Common myeloid progenitor, CD34-positive (primary cell): ENCODE measurements at regions of chr2 and their contacts with region 1.

Region 1: GRCh38 chr2:201220102-201220570 is 37.2 kb downstream of the CASP10 start:
- DNase-seq: peak in 2 of 3 donors; percentile 62 to 74
- H3K4me3 ChIP-seq: peak overlapping the region in 3 of 7 experiments; percentile 5 to 39 (median 35)
- H3K27ac ChIP-seq: peak overlapping the region in 1 of 2 experiments; percentile 56
- H3K4me1 ChIP-seq: peaks cover 13 to 42% (median 36%) of the 10 kb centered on the region in 4 experiments
- H3K27me3 ChIP-seq: no peaks in the 10 kb centered on the region

Region 2: DNA sequence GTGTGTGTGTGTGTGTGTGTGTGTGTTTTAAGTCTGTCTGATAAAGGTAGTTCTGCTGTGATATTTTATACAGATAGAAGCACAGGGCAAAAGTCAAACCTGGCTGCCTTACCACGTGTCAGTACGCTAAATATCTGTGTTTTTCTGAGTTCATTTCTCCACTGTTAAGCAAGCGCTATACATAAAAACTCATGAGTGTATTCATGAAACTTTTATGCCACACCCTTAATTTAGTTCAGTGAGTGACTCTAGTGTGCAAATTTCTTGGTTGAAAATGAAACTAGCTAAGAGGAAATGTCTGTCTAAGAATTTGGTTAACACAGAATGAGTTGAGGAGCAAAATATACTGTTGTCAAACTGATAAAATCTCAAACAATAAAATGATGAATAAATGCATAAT is 26.0 kb before region 1 on chr2:
- CTCF ChIA-PET with region 1: interaction called, 14 read pairs
- POLR2A ChIA-PET with region 1: no interaction called
- DNase-seq: peak in 2 of 3 donors; percentile 67 to 74
- H3K4me3 ChIP-seq: peak overlapping the region in 4 of 7 experiments; percentile 3 to 53 (median 22)
- H3K27ac ChIP-seq: peak overlapping the region in 1 of 2 experiments; percentile 65
- H3K4me1 ChIP-seq: peaks cover 43 to 77% (median 58%) of the 10 kb centered on the region in 4 experiments
- H3K27me3 ChIP-seq: no peaks in the 10 kb centered on the region

Region 3: DNA sequence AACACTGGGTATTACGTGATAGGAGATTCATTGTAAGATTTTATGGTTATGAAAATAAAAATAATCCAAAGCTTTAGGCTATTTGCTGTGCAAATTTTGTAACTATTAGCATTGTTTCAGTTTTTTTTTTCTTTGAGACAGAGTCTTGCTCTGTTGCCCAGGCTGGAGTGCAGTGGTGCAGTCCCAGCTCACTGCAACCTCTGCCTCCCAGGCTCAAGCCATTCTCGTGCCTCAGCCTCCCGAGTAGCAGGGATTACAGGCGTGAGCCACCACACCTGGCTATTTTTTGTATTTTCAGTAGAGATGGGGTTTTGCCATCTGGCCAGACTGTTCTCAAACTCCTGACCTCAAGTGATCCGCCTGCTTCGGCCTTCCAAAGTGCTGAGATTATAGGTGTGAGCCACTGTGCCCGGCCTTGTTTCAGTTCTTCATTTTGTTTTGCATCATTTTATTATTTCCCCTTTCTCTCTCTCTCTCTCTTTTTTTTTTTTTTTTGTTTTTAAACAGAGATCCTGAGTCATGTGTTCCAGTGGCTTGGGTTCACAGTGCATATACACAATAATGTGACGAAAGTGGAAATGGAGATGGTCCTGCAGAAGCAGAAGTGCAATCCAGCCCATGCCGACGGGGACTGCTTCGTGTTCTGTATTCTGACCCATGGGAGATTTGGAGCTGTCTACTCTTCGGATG is 11.4 kb before region 1 on chr2:
- CTCF ChIA-PET with region 1: interaction called, 26 read pairs
- POLR2A ChIA-PET with region 1: no interaction called
- DNase-seq: peak in 2 of 3 donors; percentile 42 to 47
- H3K4me3 ChIP-seq: no peak overlapping the region
- H3K27ac ChIP-seq: no peak overlapping the region
- H3K4me1 ChIP-seq: peaks cover 0 to 7% (median 3%) of the 10 kb centered on the region in 4 experiments
- H3K27me3 ChIP-seq: no peaks in the 10 kb centered on the region